Dorsolateral prefrontal cortex (tissue), 120 donors: ENCODE measurements at regions of chr9 and their contacts with region 1.

Region 1: GRCh38 chr9:78130004-78130403 is 98.4 kb upstream of the GNAQ start:
- DNase-seq: peak; percentile 18 to 92 (median 84)
- H3K4me3 ChIP-seq: peak overlapping the region in 15 of 59 donors; percentile 1 to 45 (median 15)
- H3K27ac ChIP-seq: peak overlapping the region in 58 of 59 donors; percentile 38 to 99 (median 92)
- H3K27me3 ChIP-seq: no peaks in the 10 kb centered on the region
- CTCF ChIP-seq: peak in 54 of 56 donors; percentile 28 to 83 (median 60)

Region 2: GRCh38 chr9:77770340-77770739 is 359.7 kb before region 1 on chr9:
- intact Hi-C with region 1: loop called in 1 of 2 experiments (anchors 5 kb)
- DNase-seq: no peak
- H3K4me3 ChIP-seq: peak overlapping the region in 36 of 59 donors; percentile 3 to 51 (median 32)
- H3K27ac ChIP-seq: peak overlapping the region; percentile 66 to 98 (median 94)
- H3K27me3 ChIP-seq: no peaks in the 10 kb centered on the region
- CTCF ChIP-seq: peak in 4 of 56 donors; percentile 5 to 11 (median 7)

Region 3: GRCh38 chr9:78213712-78214111 is 83.7 kb after region 1 on chr9:
- intact Hi-C with region 1: loop called (anchors 2 to 5 kb)
- DNase-seq: no peak
- H3K4me3 ChIP-seq: peak overlapping the region in 8 of 59 donors; percentile 12 to 41 (median 17)
- H3K27ac ChIP-seq: peak overlapping the region in 56 of 59 donors; percentile 6 to 86 (median 70)
- H3K27me3 ChIP-seq: no peaks in the 10 kb centered on the region
- CTCF ChIP-seq: peak in 53 of 56 donors; percentile 29 to 78 (median 58)

Region 4: DNA sequence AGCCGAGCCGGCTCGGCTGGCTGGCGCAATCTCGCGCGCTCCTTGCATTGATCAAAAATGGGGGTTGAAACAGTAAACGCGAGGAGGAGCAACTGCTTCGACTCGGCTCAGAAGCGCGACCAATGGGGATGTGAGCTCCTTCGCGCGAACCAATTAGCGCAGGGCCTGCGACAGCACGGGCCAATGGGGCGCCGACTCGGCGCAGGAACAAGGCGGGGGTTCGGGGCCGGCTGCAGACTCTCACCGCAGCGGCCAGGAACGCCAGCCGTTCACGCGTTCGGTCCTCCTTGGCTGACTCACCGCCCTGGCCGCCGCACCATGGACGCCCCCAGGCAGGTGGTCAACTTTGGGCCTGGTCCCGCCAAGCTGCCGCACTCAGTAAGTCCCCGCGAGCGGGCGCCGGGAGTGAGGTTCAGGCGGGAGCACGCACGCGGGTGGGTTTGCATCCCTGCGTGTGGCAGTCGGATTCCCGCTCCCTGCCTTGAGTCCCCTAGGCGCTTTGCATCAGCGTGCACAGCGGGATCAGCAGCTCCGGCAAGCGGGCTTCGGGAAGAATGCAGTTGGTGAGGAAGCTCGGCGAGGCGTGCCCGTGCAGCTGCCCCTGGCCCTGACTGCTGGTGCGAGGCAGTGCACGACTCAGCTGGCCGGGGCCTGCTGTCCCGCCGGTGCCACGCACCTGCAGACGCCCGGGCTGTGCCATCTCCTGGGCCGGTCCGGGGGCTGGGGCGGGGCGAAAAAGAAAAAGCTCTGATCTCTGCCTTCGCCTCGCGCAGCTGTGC is 167.1 kb after region 1 on chr9 and contains the start of gene PSAT1:
- intact Hi-C with region 1: loop called in 1 of 2 experiments (anchors 5 kb)
- DNase-seq: peak; percentile 76 to 97 (median 92)
- H3K4me3 ChIP-seq: peak within 1 kb of the TSS; percentile 57 to 96 (median 84)
- H3K27ac ChIP-seq: peak within 1 kb of the TSS; percentile 65 to 99 (median 94)
- H3K27me3 ChIP-seq: no peaks in the 10 kb centered on the region
- CTCF ChIP-seq: peak in 48 of 56 donors; percentile 12 to 66 (median 34)
- total RNA-seq, gene PSAT1: 61.4 to 222 (median 91.8) TPM